Heart right ventricle (tissue), 16 donors: ENCODE measurements at regions of chr9 and their contacts with region 1.

Region 1: DNA sequence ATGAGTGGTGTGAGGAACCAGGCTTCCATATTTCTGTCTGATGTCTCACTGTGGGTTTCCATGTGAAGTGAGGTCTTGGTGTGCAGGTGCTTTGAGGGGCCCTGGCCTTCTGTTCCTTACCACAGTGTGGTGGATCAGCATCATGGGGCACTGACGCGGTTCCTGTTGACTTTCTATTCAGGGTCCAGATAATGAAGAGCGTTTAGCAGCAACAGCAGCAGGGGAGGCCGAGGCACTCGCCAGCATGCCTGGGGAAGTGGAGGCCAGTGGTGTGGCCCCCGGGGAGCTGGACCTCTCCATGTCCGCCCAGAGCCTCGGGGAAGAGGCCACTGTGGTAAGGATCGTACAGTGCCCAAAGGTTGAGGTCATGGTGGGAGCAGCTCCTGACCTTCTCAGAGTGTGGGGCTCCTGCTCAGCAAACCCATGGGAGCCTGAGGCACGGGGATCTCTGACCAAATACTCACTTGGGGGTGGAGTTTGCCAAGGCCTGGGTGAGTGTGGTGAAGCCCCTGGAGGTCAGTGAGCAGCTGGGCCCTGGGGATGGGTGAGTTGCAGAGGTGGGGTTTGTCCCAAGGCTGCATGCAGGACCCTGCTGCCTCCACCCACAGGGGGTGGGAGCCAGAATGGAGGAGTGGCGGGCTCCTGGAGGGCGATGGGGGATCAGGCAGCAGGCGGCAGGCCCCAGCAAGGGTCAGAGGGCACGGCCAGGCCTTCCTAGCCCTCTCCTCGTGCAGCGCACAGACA is 61.2 kb downstream of the COL15A1 start:
- DNase-seq: no peak
- ATAC-seq: peak in 3 of 8 donors; percentile 6 to 31 (median 8)
- H3K4me3 ChIP-seq: no peak overlapping the region
- H3K27ac ChIP-seq: peak overlapping the region in 2 of 10 donors; percentile 10 to 43
- H3K4me1 ChIP-seq: peaks cover 0 to 17% (median 8%) of the 10 kb centered on the region in 9 donors
- H3K27me3 ChIP-seq: peaks cover 0 to 5% (median 0%) of the 10 kb centered on the region in 7 donors
- CTCF ChIP-seq: no peak

Region 2: GRCh38 chr9:99130069-99130468 is 125.2 kb after region 1 on chr9:
- intact Hi-C with region 1: loop called in 3 of 10 experiments (anchors 5 to 10 kb)
- DNase-seq: no peak
- ATAC-seq: no peak
- H3K4me3 ChIP-seq: no peak overlapping the region
- H3K27ac ChIP-seq: no peak overlapping the region
- H3K4me1 ChIP-seq: peaks cover 0 to 50% (median 12%) of the 10 kb centered on the region in 9 donors
- H3K27me3 ChIP-seq: no peaks in the 10 kb centered on the region
- CTCF ChIP-seq: no peak